Endothelial cell of umbilical vein (primary cell): ENCODE measurements at regions of chr3 and their contacts with region 1.

Region 1: DNA sequence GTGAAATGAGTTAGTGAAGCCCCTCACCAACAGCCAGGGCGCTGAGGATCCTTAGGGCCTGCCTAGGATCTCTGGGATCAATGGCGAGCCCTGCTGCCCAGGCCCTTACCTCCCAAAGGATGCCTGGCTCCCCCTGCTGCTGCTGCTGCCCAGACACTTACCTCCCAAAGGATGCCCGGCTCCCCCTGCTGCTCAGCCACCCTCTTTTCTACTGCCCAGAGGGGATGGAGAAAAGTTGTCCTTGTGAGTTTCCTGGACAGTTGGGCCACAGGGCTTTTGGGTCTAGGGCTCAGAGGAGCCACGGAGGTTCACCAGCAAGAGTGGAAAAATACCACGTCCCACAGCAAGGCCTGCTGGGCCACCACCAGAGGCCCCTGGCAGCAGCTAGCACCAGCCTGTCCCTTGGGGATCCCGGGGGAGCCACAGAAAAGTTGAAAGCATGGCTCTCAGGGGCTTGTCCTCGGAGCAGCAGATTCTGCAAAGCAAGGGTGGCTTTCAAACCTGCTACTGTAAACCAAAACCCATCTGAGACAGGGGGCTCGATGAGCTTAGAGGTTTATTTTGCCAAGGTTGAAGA is 59.4 kb downstream of the SLC6A6 start:
- DNase-seq: peak; percentile 73
- H3K4me3 ChIP-seq: no peak overlapping the region
- H3K27ac ChIP-seq: no peak overlapping the region
- H3K4me1 ChIP-seq: peaks cover 38% of the 10 kb centered on the region
- H3K27me3 ChIP-seq: no peaks in the 10 kb centered on the region
- CTCF ChIP-seq: peak; percentile 77 to 93
- POLR2A ChIP-seq: no peak

Region 2: GRCh38 chr3:14261229-14261628 is 200.6 kb before region 1 on chr3:
- CTCF ChIA-PET with region 1: interaction called, 37 read pairs
- POLR2A ChIA-PET with region 1: interaction called, 17 read pairs
- dilution Hi-C with region 1: no loop called
- intact Hi-C with region 1: loop called (anchors 1 kb)
- DNase-seq: peak; percentile 81
- H3K4me3 ChIP-seq: no peak overlapping the region
- H3K27ac ChIP-seq: no peak overlapping the region
- H3K4me1 ChIP-seq: no peaks in the 10 kb centered on the region
- H3K27me3 ChIP-seq: peaks cover 6 to 9% of the 10 kb centered on the region in 2 experiments
- CTCF ChIP-seq: peak; percentile 90 to 91
- POLR2A ChIP-seq: no peak

Region 3: DNA sequence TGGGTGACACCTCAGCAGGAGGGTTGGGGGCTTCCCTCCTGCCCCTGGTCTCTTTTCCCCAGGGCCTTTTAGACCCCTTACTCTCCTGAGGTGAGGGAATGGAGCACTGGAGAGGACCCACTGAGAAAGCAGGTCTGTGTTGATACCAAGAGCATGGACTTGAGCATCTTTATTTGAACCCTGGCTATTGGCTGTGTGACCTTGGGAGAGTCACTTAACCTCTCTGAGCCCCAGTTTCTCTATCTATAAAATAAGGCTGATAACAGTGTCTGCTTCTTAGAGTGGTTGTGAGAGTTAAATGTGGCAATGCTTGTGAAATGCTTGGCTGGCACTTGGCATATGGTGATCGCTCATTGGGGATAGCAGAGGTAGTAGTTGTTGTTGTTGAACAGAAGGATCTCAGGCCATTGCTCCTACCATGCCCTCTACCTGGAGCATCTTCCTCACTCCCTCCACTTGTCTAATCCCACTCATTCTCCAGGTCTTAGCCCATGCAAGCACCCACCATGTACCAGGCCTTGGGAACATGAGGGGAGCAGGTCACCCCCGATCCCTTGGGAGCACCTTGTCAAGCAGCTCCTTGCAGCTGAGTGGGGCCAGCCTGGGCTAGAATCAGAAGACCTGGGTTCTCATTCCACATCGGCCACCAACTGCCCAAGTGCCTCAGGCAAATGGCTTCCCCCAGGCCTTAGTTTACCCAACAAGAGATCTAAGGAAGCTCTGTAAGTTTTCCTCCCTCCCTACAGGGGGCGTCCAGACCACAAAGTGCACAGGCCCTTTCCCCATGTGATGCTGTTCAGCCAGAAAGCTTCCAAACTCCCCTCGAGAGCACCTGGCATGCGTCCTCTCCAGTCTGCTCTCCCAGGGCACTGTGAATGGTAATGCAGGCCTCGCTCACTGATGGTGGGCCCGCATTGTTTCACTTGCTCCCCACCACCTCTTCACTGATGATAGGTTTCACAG is 186.6 kb before region 1 on chr3:
- CTCF ChIA-PET with region 1: interaction called, 35 read pairs
- POLR2A ChIA-PET with region 1: no interaction called
- dilution Hi-C with region 1: no loop called
- intact Hi-C with region 1: loop called (anchors 1 kb)
- DNase-seq: peak; percentile 11
- H3K4me3 ChIP-seq: no peak overlapping the region
- H3K27ac ChIP-seq: no peak overlapping the region
- H3K4me1 ChIP-seq: no peaks in the 10 kb centered on the region
- H3K27me3 ChIP-seq: no peaks in the 10 kb centered on the region
- CTCF ChIP-seq: peak; percentile 31 to 55
- POLR2A ChIP-seq: no peak

Region 4: GRCh38 chr3:14431892-14432834 is 29.7 kb before region 1 on chr3:
- CTCF ChIA-PET with region 1: interaction called, 8 read pairs
- POLR2A ChIA-PET with region 1: no interaction called
- dilution Hi-C with region 1: no loop called
- intact Hi-C with region 1: loop called (anchors 1 kb)
- DNase-seq: peak; percentile 83
- H3K4me3 ChIP-seq: no peak overlapping the region
- H3K27ac ChIP-seq: peak overlapping the region; percentile 77
- H3K4me1 ChIP-seq: peaks cover 56% of the 10 kb centered on the region
- H3K27me3 ChIP-seq: no peaks in the 10 kb centered on the region
- CTCF ChIP-seq: no peak
- POLR2A ChIP-seq: no peak

Region 5: DNA sequence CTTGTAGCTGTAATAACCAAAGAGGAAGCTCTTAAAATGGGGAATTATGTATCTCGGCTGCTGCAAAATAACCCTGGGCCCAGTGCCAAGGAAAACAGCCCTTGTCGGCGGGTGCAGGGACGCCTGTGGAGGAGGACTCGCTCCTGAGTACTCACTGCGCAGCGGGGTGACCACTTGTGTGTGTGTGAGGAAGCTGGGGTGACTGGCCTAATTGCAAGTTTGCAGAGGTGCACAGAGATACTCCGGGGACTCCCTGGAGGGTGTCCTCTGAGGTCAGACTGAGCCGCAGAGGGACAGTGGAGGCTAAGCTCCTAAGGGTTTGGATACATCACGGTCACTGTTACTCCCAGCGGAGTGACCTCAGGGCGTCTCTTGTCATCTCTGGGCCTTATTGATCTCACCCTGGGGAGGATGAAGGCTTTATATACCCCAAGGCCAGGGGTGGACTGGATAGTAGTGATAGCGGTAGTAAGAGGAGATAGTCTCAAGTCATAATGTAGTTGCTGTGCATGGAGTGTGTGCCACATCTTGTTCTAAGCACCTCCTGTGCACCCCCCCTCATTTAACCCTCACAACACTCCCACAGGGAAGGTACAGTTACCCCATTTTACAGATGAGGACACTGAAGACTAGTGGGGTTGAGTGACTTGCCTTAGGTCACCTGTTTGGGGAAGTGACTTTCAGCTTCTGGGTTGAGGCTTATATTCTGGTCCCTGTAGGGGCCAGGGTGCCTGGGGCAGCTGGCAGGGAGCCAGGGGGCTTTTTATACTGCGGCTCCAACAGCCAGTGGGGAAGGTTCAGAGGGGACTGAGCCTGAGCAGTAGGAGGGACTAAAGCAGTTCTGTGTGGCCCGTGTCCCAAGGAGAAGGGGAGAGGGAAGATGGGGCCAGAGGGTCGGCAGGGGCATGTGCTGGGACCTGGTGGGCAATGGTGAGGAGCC is 22.0 kb before region 1 on chr3:
- CTCF ChIA-PET with region 1: interaction called, 13 read pairs
- POLR2A ChIA-PET with region 1: interaction called, 3 read pairs
- dilution Hi-C with region 1: no loop called
- intact Hi-C with region 1: loop called (anchors 1 kb)
- DNase-seq: peak; percentile 88
- H3K4me3 ChIP-seq: no peak overlapping the region
- H3K27ac ChIP-seq: peak overlapping the region; percentile 23
- H3K4me1 ChIP-seq: peaks cover 51% of the 10 kb centered on the region
- H3K27me3 ChIP-seq: no peaks in the 10 kb centered on the region
- CTCF ChIP-seq: no peak
- POLR2A ChIP-seq: no peak